ENCODE measurements at regions of chrX and their contacts with region 1.

Region 1: DNA sequence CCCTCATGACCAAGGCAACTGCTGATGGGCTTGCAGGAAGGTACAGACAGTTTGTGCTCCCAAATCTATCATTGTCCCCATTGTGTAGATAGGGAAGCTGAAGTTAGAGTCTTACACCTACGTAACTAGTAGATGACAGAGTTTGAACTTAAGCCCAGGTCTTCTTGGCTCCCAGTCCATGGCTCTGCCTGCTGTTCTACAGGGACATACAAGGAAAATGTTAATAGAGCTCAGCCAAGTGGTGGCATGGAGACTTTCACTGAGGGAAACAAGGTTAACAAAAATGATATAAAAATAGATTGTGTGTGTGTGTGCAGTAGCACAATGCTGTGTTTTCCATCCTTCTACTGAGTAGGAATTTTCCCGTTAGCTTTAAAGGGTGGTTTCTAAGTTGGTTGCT is 936.5 kb downstream of the RPA4 start:
- DNase-seq: no peak
- H3K4me3 ChIP-seq: no peak overlapping the region
- H3K27ac ChIP-seq: no peak overlapping the region
- H3K4me1 ChIP-seq: no peaks in the 10 kb centered on the region
- H3K27me3 ChIP-seq: peaks cover 0 to 59% of the 10 kb centered on the region in 2 donors
- CTCF ChIP-seq: no peak
- POLR2A ChIP-seq: no peak

Region 2: DNA sequence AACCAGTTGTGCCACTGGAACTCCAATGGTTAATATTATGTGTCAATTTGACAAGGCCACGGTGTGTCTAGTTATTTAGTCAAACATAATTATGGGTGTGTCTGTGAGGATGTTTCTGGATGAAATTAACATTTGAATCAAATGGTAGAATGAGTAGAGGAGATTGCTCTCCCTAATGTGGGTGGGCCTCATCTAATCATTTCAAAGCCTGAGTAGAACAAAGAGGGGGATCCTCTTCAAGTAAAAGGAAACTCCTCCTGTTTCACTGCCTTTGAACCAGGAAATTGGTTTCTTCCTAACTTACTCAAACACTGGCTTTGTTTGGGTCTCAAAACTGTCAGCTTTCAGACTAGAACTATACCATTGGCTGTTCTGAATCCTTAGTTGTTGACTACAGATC is 897.8 kb after region 1 on chrX:
- intact Hi-C with region 1: loop called (anchors 5 kb)
- DNase-seq: no peak
- H3K4me3 ChIP-seq: no peak overlapping the region
- H3K27ac ChIP-seq: no peak overlapping the region
- H3K4me1 ChIP-seq: no peaks in the 10 kb centered on the region
- H3K27me3 ChIP-seq: peaks cover 0 to 25% of the 10 kb centered on the region in 2 donors
- CTCF ChIP-seq: no peak
- POLR2A ChIP-seq: no peak

Measured in breast epithelium (tissue), 4 donors.